ENCODE measurements at regions of chr3 and their contacts with region 1.

Region 1: DNA sequence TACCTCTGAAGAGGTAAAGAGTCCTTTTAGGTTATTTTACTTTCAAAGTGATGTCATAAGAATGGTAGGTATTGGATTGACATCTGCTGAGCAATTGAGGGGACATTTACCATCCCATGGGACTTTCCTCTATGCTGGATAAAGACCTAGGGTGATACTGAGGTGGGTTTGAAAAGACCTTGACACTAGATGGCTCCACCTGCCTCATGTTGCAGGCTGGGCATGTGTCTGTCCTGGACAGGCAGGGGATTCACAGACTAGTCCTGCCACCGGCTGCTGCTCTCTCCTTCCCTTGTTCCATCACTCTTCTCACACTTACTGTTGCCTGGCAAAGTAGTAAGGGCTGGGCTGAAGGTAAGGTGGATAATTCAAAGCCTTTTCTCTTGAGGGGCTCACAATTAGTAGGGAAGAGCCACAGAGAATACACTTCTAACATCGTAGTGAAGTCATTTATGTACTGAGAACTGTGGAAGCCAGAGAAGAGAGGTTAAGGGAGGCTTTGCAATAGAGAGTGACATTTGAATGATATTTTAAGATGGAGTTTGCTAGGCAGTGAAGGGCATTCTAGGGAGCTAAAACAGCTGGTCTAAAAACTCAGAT is 27.7 kb downstream of the TRAK1 start:
- DNase-seq: no peak

Region 2: DNA sequence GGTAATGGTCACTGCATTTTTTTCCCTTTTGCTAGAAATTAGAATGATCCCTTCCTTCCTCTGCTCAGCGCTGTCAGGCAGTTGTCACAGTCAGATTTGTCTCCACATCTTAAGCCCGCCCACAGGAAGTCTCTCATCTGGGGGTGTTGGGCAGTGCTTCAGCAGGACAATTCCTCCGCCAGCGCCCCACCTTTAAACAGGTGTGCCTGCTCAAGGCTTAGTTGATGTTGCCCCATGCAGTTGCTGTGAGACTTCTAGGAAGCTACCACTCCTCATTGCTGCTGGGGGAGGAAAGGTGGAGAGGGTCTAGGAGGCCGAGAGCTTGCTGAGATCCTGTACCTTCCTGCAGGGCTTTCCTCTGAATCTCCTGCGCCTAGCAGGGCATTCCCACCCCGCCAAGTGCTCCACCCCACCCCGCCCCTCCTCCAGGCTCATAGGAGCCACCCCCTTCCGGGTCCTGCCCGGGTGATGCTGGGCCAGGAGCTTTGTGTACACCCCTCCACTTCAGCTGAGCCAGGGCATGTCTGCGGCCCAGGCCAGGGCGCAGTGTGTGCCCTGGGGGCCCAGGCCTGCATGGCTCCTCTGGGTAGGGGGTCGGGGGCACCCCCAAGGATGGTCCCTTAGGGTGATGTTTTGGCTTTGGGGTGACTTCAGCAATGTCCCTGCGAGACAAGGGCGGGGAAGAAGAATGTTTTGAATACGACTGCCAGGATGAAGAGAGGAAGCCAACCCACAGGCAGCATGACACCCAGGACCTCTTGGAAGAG is 41.0 kb after region 1 on chr3:
- intact Hi-C with region 1: loop called (anchors 5 kb)
- DNase-seq: no peak

Measured in cardiac septum (tissue), 1 donor.